Activated CD8-positive, alpha-beta T cell treated with anti-CD3 and anti-CD28 coated beads, Interleukin-2, amount 10 ng/mL, durations not matched to agents 7 days and 5 days (primary cell): ENCODE measurements at regions of chr1 and their contacts with region 1.

Region 1: GRCh38 chr1:32240140-32240951 is 6.7 kb upstream of the FAM167B start:
- DNase-seq: peak; percentile 62
- ATAC-seq: peak; percentile 76
- H3K4me3 Mint-ChIP-seq: peak overlapping the region; percentile 82
- H3K27ac Mint-ChIP-seq: peak overlapping the region; percentile 72
- H3K4me1 Mint-ChIP-seq: peaks cover 28% of the 10 kb centered on the region
- H3K27me3 Mint-ChIP-seq: no peaks in the 10 kb centered on the region

Region 2: GRCh38 chr1:32221980-32222755 is 18.2 kb before region 1 on chr1 and contains the starts of genes EIF3I and TMEM234:
- CTCF ChIA-PET with region 1: interaction called, 8 read pairs
- POLR2A ChIA-PET with region 1: interaction called, 13 read pairs
- DNase-seq: peak; percentile 96
- ATAC-seq: peak; percentile 86
- H3K4me3 Mint-ChIP-seq: peak within 1 kb of the TSS; percentile 97
- H3K27ac Mint-ChIP-seq: peak within 1 kb of the TSS; percentile 98
- H3K4me1 Mint-ChIP-seq: peaks cover 31% of the 10 kb centered on the region
- H3K27me3 Mint-ChIP-seq: no peaks in the 10 kb centered on the region
- total RNA-seq, gene EIF3I: 194 to 196 TPM
- total RNA-seq, gene TMEM234: 10.6 TPM

Region 3: DNA sequence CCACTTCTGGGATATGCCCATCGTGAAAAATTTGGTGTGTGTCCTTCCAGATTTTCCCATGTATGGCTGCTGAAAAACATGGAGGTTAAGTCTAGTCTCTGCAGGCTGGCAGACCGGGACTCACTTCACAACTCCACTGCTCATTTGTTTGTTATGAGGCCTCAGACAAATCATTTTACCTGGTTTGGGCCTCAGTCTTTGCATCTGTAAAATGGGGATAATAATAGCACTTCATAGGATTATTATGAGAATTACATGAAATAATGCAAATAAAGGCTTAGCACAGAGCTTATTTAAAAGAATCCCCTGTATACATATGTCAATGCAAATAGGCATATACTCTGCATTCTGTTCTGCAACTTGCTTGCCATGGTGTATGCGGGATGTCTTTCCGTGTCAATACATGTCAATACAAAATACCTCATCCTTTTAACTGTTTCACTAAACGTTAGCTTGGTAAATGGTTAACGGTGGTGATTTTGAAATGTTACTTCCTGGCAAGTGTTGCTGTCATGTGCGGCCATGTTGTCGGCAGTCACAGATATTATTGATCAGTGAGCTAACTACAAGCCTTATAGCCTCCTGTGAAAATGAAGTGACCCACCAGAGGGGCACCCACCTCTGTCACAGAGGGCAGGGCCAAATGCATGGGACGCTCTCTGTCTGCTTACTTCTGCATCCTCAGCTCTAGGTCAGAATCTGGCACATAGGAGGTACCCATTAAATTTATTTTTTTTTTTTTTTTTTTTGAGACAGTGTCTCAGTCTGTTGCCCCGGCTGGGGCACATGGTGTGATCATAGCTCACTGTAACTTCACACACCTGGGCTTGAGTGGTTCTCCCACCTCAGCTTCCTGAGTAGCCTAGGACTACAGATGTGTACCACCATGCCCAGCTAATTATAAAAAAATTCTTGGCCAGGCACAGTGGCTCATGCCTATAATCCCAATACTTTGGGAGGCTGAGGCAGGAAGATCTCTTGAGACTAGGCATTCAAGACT is 15.0 kb after region 1 on chr1:
- CTCF ChIA-PET with region 1: interaction called, 66 read pairs
- POLR2A ChIA-PET with region 1: interaction called, 71 read pairs
- DNase-seq: peak; percentile 60
- ATAC-seq: peak; percentile 4
- H3K4me3 Mint-ChIP-seq: peak overlapping the region; percentile 99
- H3K27ac Mint-ChIP-seq: peak overlapping the region; percentile 85
- H3K4me1 Mint-ChIP-seq: peaks cover 43% of the 10 kb centered on the region
- H3K27me3 Mint-ChIP-seq: no peaks in the 10 kb centered on the region

Region 4: GRCh38 chr1:32321712-32322291 is 81.5 kb after region 1 on chr1:
- CTCF ChIA-PET with region 1: interaction called, 10 read pairs
- POLR2A ChIA-PET with region 1: no interaction called
- DNase-seq: peak; percentile 51
- ATAC-seq: peak; percentile 83
- H3K4me3 Mint-ChIP-seq: peak overlapping the region; percentile 40
- H3K27ac Mint-ChIP-seq: peak overlapping the region; percentile 84
- H3K4me1 Mint-ChIP-seq: peaks cover 43% of the 10 kb centered on the region
- H3K27me3 Mint-ChIP-seq: no peaks in the 10 kb centered on the region